CD4-positive, alpha-beta memory T cell (primary cell): ENCODE measurements at regions of chr1 and their contacts with region 1.

Region 1: GRCh38 chr1:154404984-154405761 is at the start of gene IL6R:
- DNase-seq: peak; percentile 80 to 85 (median 82)
- H3K4me3 ChIP-seq: peak within 1 kb of the TSS; percentile 71 to 84
- H3K4me3 Mint-ChIP-seq: peak within 1 kb of the TSS; percentile 93 to 99 (median 97)
- H3K27ac ChIP-seq: peak within 1 kb of the TSS; percentile 68
- H3K27ac Mint-ChIP-seq: peak within 1 kb of the TSS; percentile 92 to 97 (median 96)
- H3K4me1 ChIP-seq: peaks cover 73% of the 10 kb centered on the region
- H3K4me1 Mint-ChIP-seq: peaks cover 43 to 86% (median 64%) of the 10 kb centered on the region in 4 donors
- H3K27me3 ChIP-seq: no peaks in the 10 kb centered on the region
- H3K27me3 Mint-ChIP-seq: no peaks in the 10 kb centered on the region
- total RNA-seq, gene IL6R: 101 to 106 TPM

Region 2: DNA sequence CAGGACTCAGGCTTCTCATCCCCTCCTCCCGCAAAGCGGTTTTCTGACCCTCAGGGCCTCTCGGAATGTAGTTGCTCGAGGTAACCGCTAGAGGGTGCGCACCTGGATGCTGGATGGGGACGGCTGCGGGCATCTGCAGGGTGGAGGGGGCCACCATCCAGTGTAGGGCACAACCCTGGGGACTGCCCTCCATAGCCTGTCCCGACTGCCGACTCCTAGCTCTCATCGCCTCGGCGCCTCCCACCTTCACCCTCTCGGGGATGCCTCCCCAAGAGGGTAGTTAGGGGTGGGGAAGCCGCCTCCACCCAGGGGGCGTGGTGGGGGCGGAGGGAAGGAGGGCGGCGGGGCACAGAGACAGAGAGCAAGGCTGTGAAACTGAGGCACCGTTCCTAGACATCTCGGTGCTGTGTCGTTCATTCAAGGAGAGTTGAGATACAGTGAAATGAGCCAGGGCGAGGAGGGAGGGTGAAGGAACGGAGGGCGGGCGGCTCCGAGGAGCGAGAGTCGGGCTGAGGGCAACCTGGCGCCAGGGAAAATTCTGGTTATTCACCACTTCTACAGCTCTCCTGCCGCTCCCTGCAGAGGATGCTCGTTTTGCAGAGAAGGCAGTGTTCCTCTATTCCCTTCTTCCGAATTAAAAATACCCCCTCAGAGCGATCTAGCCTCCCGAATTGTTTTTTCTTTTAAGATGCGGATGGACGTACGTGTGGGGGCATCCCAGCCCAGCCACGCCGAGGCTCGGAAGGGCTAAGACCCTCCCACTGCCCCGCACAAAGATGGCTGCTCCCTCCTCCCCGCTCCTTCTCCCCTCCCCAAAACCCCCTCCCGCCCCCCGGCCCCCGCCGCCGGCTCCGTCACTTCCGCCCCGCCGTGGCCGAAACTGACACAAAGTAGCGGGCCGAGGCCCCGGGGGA is 80.2 kb before region 1 on chr1 and contains the start of gene ATP8B2:
- CTCF ChIA-PET with region 1: interaction called, 13 read pairs
- POLR2A ChIA-PET with region 1: interaction called, 107 read pairs
- intact Hi-C with region 1: loop called (anchors 1 kb)
- DNase-seq: peak; percentile 79 to 85 (median 81)
- H3K4me3 ChIP-seq: peak within 1 kb of the TSS; percentile 61 to 66
- H3K4me3 Mint-ChIP-seq: peak within 1 kb of the TSS; percentile 93 to 99 (median 98)
- H3K27ac ChIP-seq: peak within 1 kb of the TSS; percentile 89
- H3K27ac Mint-ChIP-seq: peak within 1 kb of the TSS; percentile 86 to 98 (median 96)
- H3K4me1 ChIP-seq: peaks cover 41% of the 10 kb centered on the region
- H3K4me1 Mint-ChIP-seq: peaks cover 22 to 49% (median 32%) of the 10 kb centered on the region in 4 donors
- H3K27me3 ChIP-seq: no peaks in the 10 kb centered on the region
- H3K27me3 Mint-ChIP-seq: no peaks in the 10 kb centered on the region
- total RNA-seq, gene ATP8B2: 186 TPM

Region 3: DNA sequence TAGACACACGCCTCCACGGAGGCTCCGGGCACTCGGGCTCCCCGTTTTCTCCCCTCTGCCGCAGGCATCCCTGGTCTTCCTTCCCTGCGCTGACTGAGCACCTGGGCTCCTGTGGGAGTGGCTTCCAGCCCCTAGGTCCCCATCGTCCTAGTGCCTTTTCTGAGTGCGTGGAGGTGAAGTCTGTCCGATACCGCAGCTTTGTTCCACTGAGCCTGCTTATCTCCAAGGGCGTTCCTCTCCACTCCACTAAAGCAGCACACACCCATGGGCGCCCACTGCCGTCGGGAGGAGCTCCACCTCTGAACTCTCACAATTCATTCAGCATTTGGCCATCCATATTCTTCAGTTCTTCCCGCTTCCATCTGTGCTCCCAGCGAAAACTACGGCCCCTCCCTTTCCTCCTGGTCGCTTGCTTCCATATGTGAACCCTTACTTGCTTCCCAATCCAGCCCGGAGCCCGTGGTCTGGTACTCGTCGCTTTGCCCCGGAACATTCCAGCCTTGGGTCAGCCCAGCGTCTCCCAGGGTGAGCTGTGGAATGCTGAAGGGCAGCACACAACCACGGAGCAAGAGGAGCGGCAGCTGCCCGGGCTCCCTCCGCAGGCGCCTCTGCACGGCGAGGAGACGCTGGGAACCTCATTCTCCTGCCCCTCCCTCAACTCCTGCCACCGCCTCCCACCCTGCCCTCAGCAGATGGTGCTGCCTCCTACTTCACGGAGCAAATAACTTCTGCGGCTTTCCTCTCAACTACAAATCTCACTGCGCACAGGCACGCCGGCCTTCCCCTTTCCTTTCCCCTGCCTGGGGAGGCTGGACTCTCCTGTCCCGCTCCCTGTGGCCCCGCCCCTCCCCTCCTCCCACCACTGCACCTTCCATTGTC is 52.4 kb before region 1 on chr1:
- CTCF ChIA-PET with region 1: interaction called, 20 read pairs
- POLR2A ChIA-PET with region 1: interaction called, 97 read pairs
- intact Hi-C with region 1: loop called (anchors 1 kb)
- DNase-seq: peak; percentile 44 to 68 (median 48)
- H3K4me3 ChIP-seq: peak overlapping the region; percentile 69 to 77
- H3K4me3 Mint-ChIP-seq: peak overlapping the region; percentile 84 to 95 (median 92)
- H3K27ac ChIP-seq: peak overlapping the region; percentile 51
- H3K27ac Mint-ChIP-seq: peak overlapping the region; percentile 38 to 96 (median 90)
- H3K4me1 ChIP-seq: peaks cover 54% of the 10 kb centered on the region
- H3K4me1 Mint-ChIP-seq: peaks cover 30 to 61% (median 44%) of the 10 kb centered on the region in 4 donors
- H3K27me3 ChIP-seq: no peaks in the 10 kb centered on the region
- H3K27me3 Mint-ChIP-seq: no peaks in the 10 kb centered on the region

Region 4: GRCh38 chr1:154419620-154420571 is 14.7 kb after region 1 on chr1:
- CTCF ChIA-PET with region 1: interaction called, 33 read pairs
- POLR2A ChIA-PET with region 1: interaction called, 324 read pairs
- intact Hi-C with region 1: loop called (anchors 1 kb)
- DNase-seq: peak; percentile 40 to 81 (median 48)
- H3K4me3 ChIP-seq: peak overlapping the region; percentile 50 to 54
- H3K4me3 Mint-ChIP-seq: peak overlapping the region; percentile 64 to 84 (median 81)
- H3K27ac ChIP-seq: peak overlapping the region; percentile 58
- H3K27ac Mint-ChIP-seq: peak overlapping the region; percentile 85 to 97 (median 94)
- H3K4me1 ChIP-seq: peaks cover 94% of the 10 kb centered on the region
- H3K4me1 Mint-ChIP-seq: peaks cover 57 to 100% (median 82%) of the 10 kb centered on the region in 4 donors
- H3K27me3 ChIP-seq: no peaks in the 10 kb centered on the region
- H3K27me3 Mint-ChIP-seq: no peaks in the 10 kb centered on the region

Region 5: DNA sequence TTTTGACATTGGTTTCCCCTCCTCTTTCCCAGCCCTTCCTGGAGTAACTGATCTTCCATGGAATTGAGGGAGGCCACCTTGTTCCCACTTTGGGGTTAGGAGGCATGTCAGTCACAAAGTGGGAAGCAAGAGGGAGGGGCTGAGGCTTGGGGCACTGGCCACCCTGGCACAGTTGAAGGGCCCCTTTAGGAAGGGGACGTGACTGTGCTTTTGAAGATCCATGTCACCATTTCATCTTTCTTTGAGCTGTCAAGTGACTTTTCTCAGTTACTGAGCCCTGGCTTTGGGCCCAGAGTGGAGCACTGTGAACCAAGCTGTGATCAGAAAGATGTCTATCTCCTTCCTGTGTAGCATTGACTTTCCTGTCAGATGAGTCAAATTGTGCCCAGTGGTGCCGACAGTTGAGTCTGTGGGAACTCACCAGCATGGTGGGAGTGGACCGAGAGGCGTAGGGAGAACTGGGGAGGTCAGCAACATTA is 58.4 kb after region 1 on chr1:
- CTCF ChIA-PET with region 1: interaction called, 106 read pairs
- POLR2A ChIA-PET with region 1: interaction called, 267 read pairs
- intact Hi-C with region 1: loop called (anchors 1 kb)
- DNase-seq: peak; percentile 74 to 88 (median 77)
- H3K4me3 ChIP-seq: no peak overlapping the region
- H3K4me3 Mint-ChIP-seq: peak overlapping the region; percentile 76 to 93 (median 86)
- H3K27ac ChIP-seq: peak overlapping the region; percentile 66
- H3K27ac Mint-ChIP-seq: peak overlapping the region; percentile 94 to 100 (median 98)
- H3K4me1 ChIP-seq: peaks cover 98% of the 10 kb centered on the region
- H3K4me1 Mint-ChIP-seq: peaks cover 57 to 92% (median 79%) of the 10 kb centered on the region in 4 donors
- H3K27me3 ChIP-seq: no peaks in the 10 kb centered on the region
- H3K27me3 Mint-ChIP-seq: no peaks in the 10 kb centered on the region

Region 6: DNA sequence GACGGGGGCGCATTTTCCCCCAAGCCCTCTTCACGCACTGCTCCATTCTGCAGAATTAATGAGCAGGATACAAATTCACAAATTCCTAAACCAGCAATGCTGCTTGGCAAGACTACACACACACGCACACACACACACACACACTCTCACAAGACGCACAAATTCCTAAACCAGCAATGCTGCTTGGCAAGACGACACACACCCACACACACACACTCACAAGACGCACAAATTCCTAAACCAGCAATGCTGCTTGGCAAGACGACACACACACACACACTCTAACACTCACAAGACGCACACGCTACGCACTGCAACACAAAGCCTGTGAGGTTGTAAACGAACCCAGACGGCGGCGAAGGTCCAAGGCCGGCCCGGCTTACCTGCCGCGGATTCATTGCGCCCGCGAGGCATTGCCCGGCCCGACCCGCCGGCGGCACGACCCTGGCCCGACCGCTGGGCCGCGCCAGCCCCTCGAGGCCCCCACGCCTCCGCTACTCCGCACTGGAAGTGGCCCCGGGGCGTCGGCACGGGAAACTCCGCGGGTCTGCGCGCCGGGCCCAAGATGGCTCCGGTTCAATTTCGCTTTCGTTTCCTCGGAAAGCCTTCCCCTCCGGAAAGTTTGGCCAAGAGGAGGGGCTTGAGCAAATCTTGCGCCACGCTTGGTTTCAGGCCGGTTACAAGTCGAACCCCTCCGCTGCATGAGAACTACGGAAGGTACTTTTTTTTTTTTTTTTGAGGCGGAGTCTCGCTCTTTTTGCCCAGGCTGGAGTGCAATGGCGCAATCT is 202.6 kb after region 1 on chr1 and contains the start of gene ADAR:
- CTCF ChIA-PET with region 1: no interaction called
- POLR2A ChIA-PET with region 1: no interaction called
- intact Hi-C with region 1: loop called (anchors 5 kb)
- DNase-seq: peak; percentile 89 to 96 (median 93)
- H3K4me3 ChIP-seq: peak within 1 kb of the TSS; percentile 80 to 94
- H3K4me3 Mint-ChIP-seq: peak within 1 kb of the TSS; percentile 93 to 99 (median 98)
- H3K27ac ChIP-seq: peak within 1 kb of the TSS; percentile 97
- H3K27ac Mint-ChIP-seq: peak within 1 kb of the TSS; percentile 93 to 100 (median 98)
- H3K4me1 ChIP-seq: peaks cover 58% of the 10 kb centered on the region
- H3K4me1 Mint-ChIP-seq: peaks cover 51 to 87% (median 63%) of the 10 kb centered on the region in 4 donors
- H3K27me3 ChIP-seq: no peaks in the 10 kb centered on the region
- H3K27me3 Mint-ChIP-seq: no peaks in the 10 kb centered on the region
- total RNA-seq, gene ADAR: 240 to 247 TPM

Region 7: DNA sequence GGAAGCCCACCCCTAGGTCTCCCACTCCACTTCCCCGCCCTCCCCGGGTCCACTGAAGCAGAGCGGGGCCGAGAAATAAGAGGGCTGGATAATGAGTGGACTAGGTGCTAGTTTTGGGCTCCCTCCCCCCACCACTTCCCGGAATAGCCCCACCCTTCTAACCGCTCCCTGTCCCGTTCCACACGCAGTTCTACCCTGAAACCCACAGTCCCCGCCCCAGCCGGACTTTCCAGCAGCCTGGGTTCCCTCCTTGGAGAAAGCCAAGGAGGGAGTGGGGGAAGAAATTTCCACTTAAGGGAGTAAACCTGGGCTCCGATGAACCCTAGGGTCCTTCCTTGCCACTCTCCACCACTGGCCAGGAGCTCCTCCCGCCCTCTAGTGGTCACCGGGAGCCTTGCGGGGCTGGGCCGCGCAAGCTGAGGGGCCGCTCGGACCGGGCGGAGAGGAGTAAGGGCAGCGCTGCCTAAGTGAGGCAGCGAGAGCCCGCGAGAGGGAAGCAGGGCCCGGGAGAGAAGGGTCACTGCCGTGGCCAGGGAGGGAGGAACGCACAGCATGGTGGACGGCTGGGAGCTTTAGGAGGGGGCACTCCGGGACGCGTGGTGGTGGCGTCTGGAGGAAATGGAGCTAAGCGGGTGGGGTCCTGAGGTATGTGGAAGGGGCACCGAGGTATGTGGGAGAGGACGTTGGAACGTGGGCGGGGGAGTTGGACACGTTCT is 788.3 kb after region 1 on chr1:
- CTCF ChIA-PET with region 1: no interaction called
- POLR2A ChIA-PET with region 1: no interaction called
- intact Hi-C with region 1: no loop called
- DNase-seq: peak; percentile 60 to 72 (median 62)
- H3K4me3 ChIP-seq: peak overlapping the region; percentile 58 to 73
- H3K4me3 Mint-ChIP-seq: peak overlapping the region; percentile 87 to 97 (median 92)
- H3K27ac ChIP-seq: peak overlapping the region; percentile 67
- H3K27ac Mint-ChIP-seq: peak overlapping the region; percentile 91 to 99 (median 98)
- H3K4me1 ChIP-seq: peaks cover 27% of the 10 kb centered on the region
- H3K4me1 Mint-ChIP-seq: peaks cover 19 to 38% (median 24%) of the 10 kb centered on the region in 4 donors
- H3K27me3 ChIP-seq: no peaks in the 10 kb centered on the region
- H3K27me3 Mint-ChIP-seq: no peaks in the 10 kb centered on the region